Transverse colon (tissue), 4 donors: ENCODE measurements at regions of chr15 and their contacts with region 1.

Region 1: DNA sequence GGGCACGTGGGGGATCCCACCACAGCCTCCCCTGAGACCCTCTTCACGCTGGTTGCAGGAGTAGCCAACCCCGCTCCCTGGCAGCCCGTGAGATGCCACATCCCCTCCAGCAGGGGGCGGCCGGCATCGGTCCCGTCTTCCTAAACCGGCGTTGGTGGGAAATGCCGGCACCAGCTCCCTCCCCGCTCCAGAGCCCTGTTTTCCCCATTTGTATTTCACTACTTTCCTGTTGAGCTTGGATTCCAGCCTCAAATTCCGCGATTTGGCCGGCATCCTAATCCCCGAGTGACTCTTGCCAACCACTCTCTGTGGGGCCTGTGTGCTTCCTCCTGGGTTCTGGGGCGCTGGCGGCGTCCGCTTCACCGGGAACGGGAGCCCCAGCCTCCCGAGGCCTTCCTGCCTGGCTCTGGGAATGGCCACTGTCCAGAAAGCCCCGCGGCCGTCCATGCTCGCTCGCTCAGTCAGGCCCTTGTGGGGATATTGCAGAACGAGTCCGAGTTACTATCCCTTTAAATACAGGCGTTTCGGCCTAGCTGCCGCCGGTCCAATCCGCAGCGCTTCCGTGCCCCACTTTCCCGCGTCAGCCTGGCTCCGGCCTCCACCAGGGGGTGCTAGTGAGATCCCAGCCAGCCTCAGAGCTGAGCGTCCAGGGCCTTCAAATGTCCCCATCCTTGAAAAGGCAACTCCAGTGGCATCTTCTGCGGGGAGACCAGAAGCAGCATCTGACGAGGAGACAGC is 8.1 kb upstream of the ADAMTS17 start:
- DNase-seq: peak; percentile 95
- H3K4me3 ChIP-seq: peak overlapping the region; percentile 71 to 89 (median 76)
- H3K27ac ChIP-seq: peak overlapping the region; percentile 95 to 97 (median 96)
- H3K4me1 ChIP-seq: peaks cover 3 to 13% (median 5%) of the 10 kb centered on the region in 4 donors
- H3K27me3 ChIP-seq: peaks cover 9% of the 10 kb centered on the region
- CTCF ChIP-seq: peak; percentile 68 to 93 (median 87)
- EP300 ChIP-seq: no peak
- POLR2A ChIP-seq: peak; percentile 30

Region 2: GRCh38 chr15:100383302-100384107 is 33.6 kb after region 1 on chr15:
- in situ Hi-C with region 1: no loop called
- intact Hi-C with region 1: no loop called
- DNase-seq: peak; percentile 19
- H3K4me3 ChIP-seq: no peak overlapping the region
- H3K27ac ChIP-seq: no peak overlapping the region
- H3K4me1 ChIP-seq: no peaks in the 10 kb centered on the region
- H3K27me3 ChIP-seq: no peaks in the 10 kb centered on the region
- CTCF ChIP-seq: peak; percentile 40 to 60 (median 41)
- EP300 ChIP-seq: no peak
- POLR2A ChIP-seq: no peak

Region 3: GRCh38 chr15:100405179-100405578 is 55.3 kb after region 1 on chr15:
- in situ Hi-C with region 1: no loop called
- intact Hi-C with region 1: no loop called
- DNase-seq: no peak
- H3K4me3 ChIP-seq: no peak overlapping the region
- H3K27ac ChIP-seq: no peak overlapping the region
- H3K4me1 ChIP-seq: no peaks in the 10 kb centered on the region
- H3K27me3 ChIP-seq: no peaks in the 10 kb centered on the region
- CTCF ChIP-seq: no peak
- EP300 ChIP-seq: no peak
- POLR2A ChIP-seq: no peak

Region 4: GRCh38 chr15:100433300-100433699 is 83.4 kb after region 1 on chr15:
- in situ Hi-C with region 1: no loop called
- intact Hi-C with region 1: no loop called
- DNase-seq: no peak
- H3K4me3 ChIP-seq: no peak overlapping the region
- H3K27ac ChIP-seq: no peak overlapping the region
- H3K4me1 ChIP-seq: peaks cover 0 to under 1% (median 0%) of the 10 kb centered on the region in 4 donors
- H3K27me3 ChIP-seq: no peaks in the 10 kb centered on the region
- CTCF ChIP-seq: no peak
- EP300 ChIP-seq: no peak
- POLR2A ChIP-seq: no peak

Region 5: GRCh38 chr15:100572362-100572983 is 222.6 kb after region 1 on chr15:
- in situ Hi-C with region 1: loop called in 3 of 4 experiments (anchors 5 to 25 kb)
- intact Hi-C with region 1: loop called (anchors 2 kb)
- DNase-seq: no peak
- H3K4me3 ChIP-seq: no peak overlapping the region
- H3K27ac ChIP-seq: no peak overlapping the region
- H3K4me1 ChIP-seq: no peaks in the 10 kb centered on the region
- H3K27me3 ChIP-seq: no peaks in the 10 kb centered on the region
- CTCF ChIP-seq: peak; percentile 35 to 66 (median 54)
- EP300 ChIP-seq: no peak
- POLR2A ChIP-seq: no peak